Activated CD4-positive, alpha-beta T cell treated with anti-CD3 and anti-CD28 coated beads for 36 hours (primary cell): ENCODE measurements at regions of chr11 and their contacts with region 1.

Region 1: DNA sequence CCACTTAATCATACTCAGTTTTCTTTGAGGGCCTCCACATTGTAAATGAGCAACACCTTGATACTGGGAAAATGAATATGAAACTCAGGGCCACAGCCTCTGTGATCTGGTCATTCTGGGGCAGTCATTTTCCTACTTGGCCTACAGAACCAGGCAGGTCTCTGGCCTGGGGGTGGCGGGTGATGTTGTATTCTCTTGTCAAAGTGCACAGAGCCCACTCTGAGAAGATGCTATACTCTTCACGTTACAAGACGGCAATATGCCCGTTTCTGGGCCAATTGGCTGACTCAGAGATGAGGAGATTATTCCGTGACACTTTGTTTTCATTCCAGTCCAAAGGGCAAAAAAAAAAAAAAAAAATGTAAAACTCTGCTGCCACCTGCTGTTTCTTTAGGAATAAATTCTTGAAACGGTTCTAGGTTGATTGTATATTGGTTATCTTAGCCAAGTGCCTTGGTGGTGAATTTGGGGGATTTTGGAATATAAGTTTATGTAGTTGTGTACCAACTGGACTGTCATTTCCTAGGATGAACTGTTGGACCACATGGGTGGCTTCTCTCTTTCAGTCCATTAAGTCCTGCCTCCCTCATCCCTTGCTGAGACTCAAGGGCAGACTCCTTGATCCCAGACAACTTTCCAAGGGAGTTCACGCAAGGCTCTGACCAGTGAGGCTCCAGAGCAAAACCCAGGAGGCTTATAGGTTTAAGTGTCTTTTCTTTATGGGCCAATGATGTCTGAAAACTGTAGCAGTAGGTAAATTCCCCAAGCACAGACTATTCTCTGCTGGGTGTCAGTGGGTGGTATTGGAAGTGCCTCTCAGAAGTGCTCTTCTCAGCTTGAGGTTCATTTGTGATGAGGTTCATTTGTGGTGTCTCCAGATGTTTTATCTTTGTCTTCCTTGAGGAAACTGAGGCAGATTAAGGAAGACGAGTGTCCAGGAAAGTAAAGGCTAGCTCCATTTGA is 18.2 kb downstream of the ADM start:
- DNase-seq: peak; percentile 71
- ATAC-seq: peak; percentile 84
- H3K4me3 Mint-ChIP-seq: peak overlapping the region; percentile 26
- H3K27ac Mint-ChIP-seq: peak overlapping the region; percentile 86
- H3K4me1 Mint-ChIP-seq: peaks cover 16% of the 10 kb centered on the region
- H3K27me3 Mint-ChIP-seq: peaks cover 2% of the 10 kb centered on the region

Region 2: GRCh38 chr11:9534791-9535781 is 788.0 kb before region 1 on chr11:
- CTCF ChIA-PET with region 1: interaction called, 4 read pairs
- POLR2A ChIA-PET with region 1: no interaction called
- intact Hi-C with region 1: loop called in 1 of 2 experiments (anchors 10 kb)
- DNase-seq: peak; percentile 91
- ATAC-seq: peak; percentile 71
- H3K4me3 Mint-ChIP-seq: no peak overlapping the region
- H3K27ac Mint-ChIP-seq: no peak overlapping the region
- H3K4me1 Mint-ChIP-seq: no peaks in the 10 kb centered on the region
- H3K27me3 Mint-ChIP-seq: no peaks in the 10 kb centered on the region

Region 3: GRCh38 chr11:9861860-9862725 is 461.0 kb before region 1 on chr11:
- CTCF ChIA-PET with region 1: interaction called, 4 read pairs
- POLR2A ChIA-PET with region 1: no interaction called
- intact Hi-C with region 1: loop called in 1 of 2 experiments (anchors 2 kb)
- DNase-seq: peak; percentile 71
- ATAC-seq: peak; percentile 74
- H3K4me3 Mint-ChIP-seq: no peak overlapping the region
- H3K27ac Mint-ChIP-seq: no peak overlapping the region
- H3K4me1 Mint-ChIP-seq: peaks cover 23% of the 10 kb centered on the region
- H3K27me3 Mint-ChIP-seq: no peaks in the 10 kb centered on the region

Region 4: GRCh38 chr11:9972989-9973388 is 350.1 kb before region 1 on chr11:
- CTCF ChIA-PET with region 1: no interaction called
- POLR2A ChIA-PET with region 1: no interaction called
- intact Hi-C with region 1: loop called in 1 of 2 experiments (anchors 2 kb)
- DNase-seq: peak; percentile 37
- ATAC-seq: peak; percentile 78
- H3K4me3 Mint-ChIP-seq: no peak overlapping the region
- H3K27ac Mint-ChIP-seq: no peak overlapping the region
- H3K4me1 Mint-ChIP-seq: no peaks in the 10 kb centered on the region
- H3K27me3 Mint-ChIP-seq: no peaks in the 10 kb centered on the region

Region 5: GRCh38 chr11:10208131-10208575 is 115.0 kb before region 1 on chr11:
- CTCF ChIA-PET with region 1: interaction called, 19 read pairs
- POLR2A ChIA-PET with region 1: no interaction called
- intact Hi-C with region 1: loop called (anchors 1 kb)
- DNase-seq: peak; percentile 11
- ATAC-seq: peak; percentile 74
- H3K4me3 Mint-ChIP-seq: no peak overlapping the region
- H3K27ac Mint-ChIP-seq: no peak overlapping the region
- H3K4me1 Mint-ChIP-seq: no peaks in the 10 kb centered on the region
- H3K27me3 Mint-ChIP-seq: peaks cover 3% of the 10 kb centered on the region

Region 6: GRCh38 chr11:10263929-10264328 is 59.2 kb before region 1 on chr11:
- CTCF ChIA-PET with region 1: no interaction called
- POLR2A ChIA-PET with region 1: no interaction called
- intact Hi-C with region 1: no loop called
- DNase-seq: no peak
- ATAC-seq: no peak
- H3K4me3 Mint-ChIP-seq: no peak overlapping the region
- H3K27ac Mint-ChIP-seq: no peak overlapping the region
- H3K4me1 Mint-ChIP-seq: no peaks in the 10 kb centered on the region
- H3K27me3 Mint-ChIP-seq: no peaks in the 10 kb centered on the region

Region 7: DNA sequence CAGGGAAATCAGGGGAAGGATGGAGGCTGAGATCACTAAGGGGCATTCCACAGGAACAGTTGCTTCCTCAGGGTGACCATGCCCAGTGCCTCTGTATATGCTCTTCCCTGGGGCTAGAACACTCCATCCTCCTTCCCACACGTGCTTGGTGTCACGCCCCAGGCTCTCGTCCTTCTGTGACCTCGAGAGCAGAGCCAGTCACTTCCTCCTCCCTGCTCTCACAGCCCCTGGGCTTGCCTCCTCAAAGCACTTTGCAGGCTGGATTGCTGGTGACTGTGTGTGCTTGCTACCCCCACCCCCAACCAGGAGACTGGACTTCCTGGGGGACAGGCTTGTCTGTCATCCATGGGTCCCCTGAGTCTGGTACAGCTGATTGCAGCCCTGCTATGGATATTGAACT is 75.4 kb after region 1 on chr11:
- CTCF ChIA-PET with region 1: no interaction called
- POLR2A ChIA-PET with region 1: no interaction called
- intact Hi-C with region 1: no loop called
- DNase-seq: no peak
- ATAC-seq: peak; percentile 57
- H3K4me3 Mint-ChIP-seq: no peak overlapping the region
- H3K27ac Mint-ChIP-seq: no peak overlapping the region
- H3K4me1 Mint-ChIP-seq: no peaks in the 10 kb centered on the region
- H3K27me3 Mint-ChIP-seq: peaks cover 5% of the 10 kb centered on the region

Region 8: DNA sequence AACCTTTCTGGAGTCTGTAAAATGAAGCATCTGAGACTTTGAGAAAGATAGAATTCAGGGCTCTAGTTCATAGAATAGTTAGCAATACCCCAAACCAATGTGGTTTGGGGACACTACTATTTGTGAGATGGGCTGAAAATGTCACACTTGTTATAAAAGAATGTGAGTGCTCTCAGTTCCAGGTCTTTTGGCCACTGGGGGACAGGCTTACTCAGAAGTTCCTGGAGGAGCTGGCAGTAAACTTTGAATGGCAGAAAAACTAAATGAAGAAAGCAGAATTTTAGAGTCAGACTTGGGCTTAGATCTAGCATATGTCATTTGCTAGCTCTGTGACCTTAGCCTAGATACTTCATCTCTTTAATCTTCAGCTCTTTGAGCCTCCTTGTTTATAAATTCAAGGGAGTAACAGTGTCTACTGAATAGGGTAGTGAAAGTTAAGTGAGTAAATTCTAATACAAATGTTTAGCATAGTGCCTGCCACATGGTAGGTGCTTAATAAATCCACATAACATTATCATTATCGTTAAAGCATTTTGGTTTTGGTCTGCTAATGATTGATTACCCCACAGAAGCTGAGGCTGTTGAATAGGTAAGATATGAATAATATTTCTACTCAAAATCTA is 241.7 kb after region 1 on chr11:
- CTCF ChIA-PET with region 1: no interaction called
- POLR2A ChIA-PET with region 1: no interaction called
- intact Hi-C with region 1: no loop called
- DNase-seq: no peak
- ATAC-seq: no peak
- H3K4me3 Mint-ChIP-seq: no peak overlapping the region
- H3K27ac Mint-ChIP-seq: no peak overlapping the region
- H3K4me1 Mint-ChIP-seq: no peaks in the 10 kb centered on the region
- H3K27me3 Mint-ChIP-seq: no peaks in the 10 kb centered on the region

Region 9: GRCh38 chr11:10592331-10592730 is 269.2 kb after region 1 on chr11:
- CTCF ChIA-PET with region 1: no interaction called
- POLR2A ChIA-PET with region 1: no interaction called
- intact Hi-C with region 1: no loop called
- DNase-seq: no peak
- ATAC-seq: no peak
- H3K4me3 Mint-ChIP-seq: no peak overlapping the region
- H3K27ac Mint-ChIP-seq: no peak overlapping the region
- H3K4me1 Mint-ChIP-seq: peaks cover 4% of the 10 kb centered on the region
- H3K27me3 Mint-ChIP-seq: peaks cover 5% of the 10 kb centered on the region